Head of caudate nucleus (tissue), 42 donors: ENCODE measurements at regions of chr11 and their contacts with region 1.

Region 1: GRCh38 chr11:36041988-36042611 is 98.2 kb downstream of the LDLRAD3 start:
- DNase-seq: peak in 12 of 42 donors; percentile 16 to 67 (median 29)

Region 2: GRCh38 chr11:36265793-36266628 is 223.9 kb after region 1 on chr11:
- intact Hi-C with region 1: loop called (anchors 10 kb)
- DNase-seq: peak in 35 of 42 donors; percentile 22 to 84 (median 55)